Right ventricle myocardium inferior (tissue), 1 donor: ENCODE measurements at regions of chr9 and their contacts with region 1.

Region 1: DNA sequence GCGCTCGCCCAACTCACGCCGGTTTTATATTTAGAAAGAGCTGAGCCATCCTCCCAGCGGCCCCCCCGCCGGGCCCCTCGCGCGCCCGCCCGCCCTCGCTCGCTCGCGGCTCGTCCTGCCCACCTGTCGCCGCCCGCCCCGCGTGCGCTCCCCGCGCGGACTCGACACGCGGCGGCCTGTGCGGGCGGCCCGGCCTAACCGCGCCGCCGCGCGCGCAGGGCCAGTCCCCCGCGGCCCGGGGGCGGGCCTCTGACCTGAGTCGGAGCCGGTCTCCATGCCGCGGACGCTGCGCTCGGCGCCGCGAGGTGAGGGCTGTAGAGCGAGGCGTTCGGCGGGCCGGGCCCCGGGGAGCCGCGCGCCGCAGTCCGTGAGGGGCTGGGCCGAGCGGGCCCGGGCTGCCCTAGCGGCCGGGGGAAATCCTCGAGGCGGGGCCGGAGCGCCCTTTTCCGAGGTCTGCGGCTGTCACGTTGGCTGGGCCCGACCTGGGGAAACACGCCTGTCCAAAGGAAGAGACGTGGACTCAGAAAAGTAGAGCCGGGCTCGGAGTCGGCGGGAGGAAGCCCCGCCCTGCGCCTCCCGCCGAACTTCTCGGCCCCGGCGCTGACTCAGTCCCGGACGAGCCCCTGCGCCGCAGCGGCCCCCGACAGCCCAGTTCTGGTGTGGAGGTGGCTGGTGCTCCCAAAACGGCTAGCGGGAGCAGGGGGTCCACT is at the start of gene ECPAS:
- DNase-seq: peak; percentile 88
- ATAC-seq: peak; percentile 79
- total RNA-seq, gene ECPAS: 108 TPM

Region 2: GRCh38 chr9:111525056-111525977 is 41.3 kb after region 1 on chr9 and contains the start of gene ZNF483:
- intact Hi-C with region 1: loop called (anchors 2 kb)
- DNase-seq: peak; percentile 84
- ATAC-seq: peak; percentile 91
- total RNA-seq, gene ZNF483: 4.2 TPM